Endothelial cell of umbilical vein (primary cell): ENCODE measurements at regions of chr10 and their contacts with region 1.

Region 1: DNA sequence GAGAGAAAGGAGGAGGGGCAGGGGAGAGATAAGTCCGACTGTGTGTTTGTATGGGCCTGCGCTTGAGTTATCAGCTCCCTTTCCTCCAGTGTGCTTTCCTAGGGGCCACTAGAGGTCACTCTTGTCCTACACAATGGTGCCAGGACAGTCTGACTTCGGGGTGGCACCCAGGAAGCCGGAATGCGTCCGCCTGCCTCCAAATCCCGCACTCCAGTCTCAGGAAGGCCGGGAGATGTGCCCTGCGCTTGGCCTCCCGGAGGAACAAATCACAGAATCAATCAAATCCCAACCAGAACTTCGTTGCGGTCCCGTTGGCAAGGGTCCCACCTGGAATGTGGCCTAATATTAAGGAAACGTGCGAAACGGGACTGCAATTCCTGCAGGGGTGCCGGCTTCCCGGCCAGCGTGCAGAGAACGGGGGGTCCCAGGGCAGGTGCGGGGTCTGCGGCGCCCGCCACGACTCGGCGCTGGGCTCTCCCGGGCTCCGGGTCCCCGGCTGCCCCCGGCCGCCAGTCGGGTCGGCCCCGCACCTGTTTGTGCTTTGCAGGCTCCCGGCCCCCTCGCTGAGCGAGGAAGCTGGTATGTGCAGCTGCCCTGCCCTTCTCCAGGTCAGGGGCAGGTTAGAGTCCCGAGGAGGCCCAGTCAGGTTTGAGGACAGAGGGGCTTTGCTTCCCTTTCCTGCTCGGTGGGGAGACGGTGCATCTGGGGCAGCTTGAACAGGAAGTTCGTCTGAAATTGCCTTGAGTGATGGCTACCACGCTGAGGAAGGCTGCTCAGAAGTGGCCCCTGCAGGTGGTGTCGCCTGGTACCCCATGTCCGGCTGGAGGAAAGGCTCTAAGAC is 21.0 kb upstream of the HPS1 start:
- DNase-seq: peak; percentile 56
- H3K4me3 ChIP-seq: peak overlapping the region in 2 of 3 experiments; percentile 27 to 45
- H3K27ac ChIP-seq: no peak overlapping the region
- H3K4me1 ChIP-seq: peaks cover 3% of the 10 kb centered on the region
- H3K27me3 ChIP-seq: no peaks in the 10 kb centered on the region
- CTCF ChIP-seq: peak; percentile 71 to 80
- POLR2A ChIP-seq: no peak

Region 2: GRCh38 chr10:97948822-97949221 is 518.9 kb before region 1 on chr10:
- CTCF ChIA-PET with region 1: no interaction called
- POLR2A ChIA-PET with region 1: no interaction called
- dilution Hi-C with region 1: no loop called
- intact Hi-C with region 1: no loop called
- DNase-seq: no peak
- H3K4me3 ChIP-seq: no peak overlapping the region
- H3K27ac ChIP-seq: no peak overlapping the region
- H3K4me1 ChIP-seq: no peaks in the 10 kb centered on the region
- H3K27me3 ChIP-seq: no peaks in the 10 kb centered on the region
- CTCF ChIP-seq: no peak
- POLR2A ChIP-seq: no peak

Region 3: GRCh38 chr10:98295907-98296306 is 171.8 kb before region 1 on chr10:
- CTCF ChIA-PET with region 1: no interaction called
- POLR2A ChIA-PET with region 1: no interaction called
- dilution Hi-C with region 1: no loop called
- intact Hi-C with region 1: no loop called
- DNase-seq: no peak
- H3K4me3 ChIP-seq: no peak overlapping the region
- H3K27ac ChIP-seq: no peak overlapping the region
- H3K4me1 ChIP-seq: no peaks in the 10 kb centered on the region
- H3K27me3 ChIP-seq: peaks cover 5 to 12% of the 10 kb centered on the region in 2 experiments
- CTCF ChIP-seq: no peak
- POLR2A ChIP-seq: no peak

Region 4: GRCh38 chr10:98404571-98405359 is 63.0 kb before region 1 on chr10:
- CTCF ChIA-PET with region 1: no interaction called
- POLR2A ChIA-PET with region 1: no interaction called
- dilution Hi-C with region 1: no loop called
- intact Hi-C with region 1: no loop called
- DNase-seq: no peak
- H3K4me3 ChIP-seq: no peak overlapping the region
- H3K27ac ChIP-seq: no peak overlapping the region
- H3K4me1 ChIP-seq: no peaks in the 10 kb centered on the region
- H3K27me3 ChIP-seq: no peaks in the 10 kb centered on the region
- CTCF ChIP-seq: no peak
- POLR2A ChIP-seq: no peak

Region 5: GRCh38 chr10:98425511-98426352 is 42.0 kb before region 1 on chr10:
- CTCF ChIA-PET with region 1: interaction called, 45 read pairs
- POLR2A ChIA-PET with region 1: no interaction called
- dilution Hi-C with region 1: no loop called
- intact Hi-C with region 1: no loop called
- DNase-seq: peak; percentile 46
- H3K4me3 ChIP-seq: no peak overlapping the region
- H3K27ac ChIP-seq: no peak overlapping the region
- H3K4me1 ChIP-seq: no peaks in the 10 kb centered on the region
- H3K27me3 ChIP-seq: no peaks in the 10 kb centered on the region
- CTCF ChIP-seq: peak; percentile 79 to 80
- POLR2A ChIP-seq: no peak

Region 6: DNA sequence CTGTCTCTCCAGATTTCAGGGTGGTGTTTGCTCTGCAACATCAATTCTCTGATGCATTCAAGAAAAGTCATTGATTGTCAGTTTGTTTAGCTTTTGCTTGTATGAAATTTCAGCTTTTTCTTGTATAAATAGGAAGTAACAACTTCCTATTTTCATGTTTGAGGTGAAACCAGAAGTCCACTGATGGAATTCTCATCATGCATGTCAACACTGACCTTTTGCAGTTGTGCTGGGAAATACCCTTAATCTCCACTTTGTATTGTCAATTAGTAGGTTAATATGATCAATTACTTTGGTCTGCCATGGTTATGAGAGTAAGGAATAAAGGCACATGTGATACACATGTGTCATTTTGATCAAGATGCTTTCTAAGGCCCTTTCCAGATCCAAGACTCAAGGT is 187.8 kb after region 1 on chr10:
- CTCF ChIA-PET with region 1: interaction called, 16 read pairs
- POLR2A ChIA-PET with region 1: no interaction called
- dilution Hi-C with region 1: no loop called
- intact Hi-C with region 1: no loop called
- DNase-seq: no peak
- H3K4me3 ChIP-seq: no peak overlapping the region
- H3K27ac ChIP-seq: no peak overlapping the region
- H3K4me1 ChIP-seq: no peaks in the 10 kb centered on the region
- H3K27me3 ChIP-seq: no peaks in the 10 kb centered on the region
- CTCF ChIP-seq: no peak
- POLR2A ChIP-seq: no peak

Region 7: GRCh38 chr10:99172130-99172738 is 704.5 kb after region 1 on chr10:
- CTCF ChIA-PET with region 1: interaction called, 3 read pairs
- POLR2A ChIA-PET with region 1: no interaction called
- dilution Hi-C with region 1: no loop called
- intact Hi-C with region 1: loop called (anchors 5 kb)
- DNase-seq: peak; percentile 11
- H3K4me3 ChIP-seq: no peak overlapping the region
- H3K27ac ChIP-seq: no peak overlapping the region
- H3K4me1 ChIP-seq: no peaks in the 10 kb centered on the region
- H3K27me3 ChIP-seq: no peaks in the 10 kb centered on the region
- CTCF ChIP-seq: peak in 1 of 2 donors; percentile 33
- POLR2A ChIP-seq: no peak

Region 8: DNA sequence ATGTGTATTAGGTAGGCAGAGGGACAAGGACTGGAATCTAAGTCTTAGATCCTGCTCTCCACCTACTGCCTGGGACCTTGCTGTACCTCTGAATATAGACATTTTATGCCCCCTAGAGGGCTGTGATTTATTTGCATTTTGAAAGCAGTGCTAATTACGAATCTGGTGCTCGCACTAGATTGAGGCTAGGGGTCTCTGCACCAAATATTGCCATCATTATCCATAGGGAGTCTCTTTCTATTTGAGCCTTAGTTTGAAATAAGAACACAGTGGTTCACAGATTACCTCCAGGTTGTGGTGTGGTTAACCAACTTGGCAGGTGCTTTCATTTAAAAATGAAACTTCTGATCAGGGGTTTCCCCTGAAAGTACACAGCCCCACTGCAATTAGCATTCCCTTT is 903.3 kb after region 1 on chr10:
- CTCF ChIA-PET with region 1: interaction called, 11 read pairs
- POLR2A ChIA-PET with region 1: no interaction called
- dilution Hi-C with region 1: no loop called
- intact Hi-C with region 1: no loop called
- DNase-seq: peak; percentile 36
- H3K4me3 ChIP-seq: no peak overlapping the region
- H3K27ac ChIP-seq: no peak overlapping the region
- H3K4me1 ChIP-seq: peaks cover 18% of the 10 kb centered on the region
- H3K27me3 ChIP-seq: peaks cover 27 to 31% of the 10 kb centered on the region in 2 experiments
- CTCF ChIP-seq: peak; percentile 28 to 30
- POLR2A ChIP-seq: no peak

Region 9: DNA sequence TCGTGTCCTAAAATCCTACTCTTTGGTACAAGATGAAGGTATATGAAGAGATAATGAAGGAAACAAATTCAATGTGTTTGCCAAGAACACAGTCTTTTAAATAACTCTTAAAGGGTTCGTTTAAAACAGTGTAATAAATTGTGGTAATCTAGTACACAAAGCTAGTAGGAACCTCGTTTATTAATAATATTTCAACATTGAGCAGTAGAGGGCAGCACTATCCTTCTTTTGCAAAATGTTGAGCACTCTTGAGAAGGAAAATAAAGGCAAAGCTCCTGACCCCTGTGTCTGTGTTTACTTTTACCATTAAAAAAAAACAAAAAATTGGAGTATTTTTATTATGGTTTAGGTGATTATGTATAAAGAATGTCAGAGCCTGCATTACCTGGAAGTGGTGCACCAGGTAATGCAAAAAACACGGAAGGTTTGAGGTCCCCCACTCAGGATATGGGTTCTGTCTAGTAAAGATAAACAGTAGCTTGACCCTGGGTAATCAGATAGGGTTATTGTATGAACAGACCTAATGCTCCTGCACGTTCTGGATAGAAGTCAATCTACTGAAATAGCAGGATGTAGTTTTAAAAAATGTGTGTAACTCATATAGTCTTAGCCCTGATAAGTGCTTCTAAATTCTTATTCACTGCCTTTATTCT is 968.4 kb after region 1 on chr10:
- CTCF ChIA-PET with region 1: interaction called, 19 read pairs
- POLR2A ChIA-PET with region 1: no interaction called
- dilution Hi-C with region 1: no loop called
- intact Hi-C with region 1: loop called (anchors 2 kb)
- DNase-seq: peak; percentile 64
- H3K4me3 ChIP-seq: no peak overlapping the region
- H3K27ac ChIP-seq: no peak overlapping the region
- H3K4me1 ChIP-seq: peaks cover 7% of the 10 kb centered on the region
- H3K27me3 ChIP-seq: no peaks in the 10 kb centered on the region
- CTCF ChIP-seq: peak; percentile 21 to 23
- POLR2A ChIP-seq: no peak